CD14-positive monocyte (primary cell): ENCODE measurements at regions of chr17 and their contacts with region 1.

Region 1: GRCh38 chr17:36591434-36592315 is at the start of gene DHRS11:
- DNase-seq: peak; percentile 40 to 64 (median 51)
- H3K4me3 ChIP-seq: peak within 1 kb of the TSS; percentile 40 to 84 (median 51)
- H3K4me3 Mint-ChIP-seq: peak within 1 kb of the TSS; percentile 75 to 80
- H3K27ac ChIP-seq: no peak within 1 kb of the TSS
- H3K27ac Mint-ChIP-seq: peak within 1 kb of the TSS in 2 of 7 donors; percentile 36 to 66
- H3K4me1 ChIP-seq: peaks cover 11 to 18% of the 10 kb centered on the region in 2 donors
- H3K4me1 Mint-ChIP-seq: peaks cover 23% of the 10 kb centered on the region
- H3K27me3 ChIP-seq: peaks cover 6 to 15% of the 10 kb centered on the region in 2 donors
- H3K27me3 Mint-ChIP-seq: peaks cover 11 to 16% (median 13%) of the 10 kb centered on the region in 3 donors
- CTCF ChIP-seq: no peak
- polyA plus RNA-seq, gene DHRS11: 1.2 to 4.3 (median 2.7) TPM

Region 2: GRCh38 chr17:36545465-36546417 is 45.9 kb before region 1 on chr17:
- intact Hi-C with region 1: loop called (anchors 5 kb)
- DNase-seq: peak; percentile 90 to 97 (median 94)
- H3K4me3 ChIP-seq: peak overlapping the region; percentile 68 to 96 (median 88)
- H3K4me3 Mint-ChIP-seq: peak overlapping the region; percentile 87 to 92
- H3K27ac ChIP-seq: peak overlapping the region; percentile 88 to 97
- H3K27ac Mint-ChIP-seq: peak overlapping the region; percentile 93 to 98 (median 96)
- H3K4me1 ChIP-seq: peaks cover 51 to 61% of the 10 kb centered on the region in 2 donors
- H3K4me1 Mint-ChIP-seq: peaks cover 48% of the 10 kb centered on the region
- H3K27me3 ChIP-seq: no peaks in the 10 kb centered on the region
- H3K27me3 Mint-ChIP-seq: no peaks in the 10 kb centered on the region
- CTCF ChIP-seq: no peak

Region 3: DNA sequence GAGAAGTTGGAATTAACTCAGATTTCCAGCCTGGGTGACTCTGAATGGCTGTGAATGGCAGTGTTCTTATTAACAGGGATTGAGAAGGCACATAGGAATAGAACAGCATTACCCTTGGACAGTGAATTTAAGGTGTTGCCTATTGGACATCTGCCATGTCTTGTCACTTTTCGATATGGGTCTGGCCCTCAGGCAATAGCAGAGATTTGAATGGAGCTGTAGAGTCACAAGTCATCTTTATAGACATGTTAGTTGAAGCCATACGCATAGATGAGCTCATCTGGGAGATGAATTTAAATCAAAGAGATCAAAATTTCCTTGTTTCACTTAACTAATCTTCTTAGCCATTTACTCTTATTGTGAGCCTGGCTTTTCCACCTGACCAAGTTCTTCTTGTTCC is 14.9 kb before region 1 on chr17:
- intact Hi-C with region 1: no loop called
- DNase-seq: no peak
- H3K4me3 ChIP-seq: no peak overlapping the region
- H3K4me3 Mint-ChIP-seq: no peak overlapping the region
- H3K27ac ChIP-seq: no peak overlapping the region
- H3K27ac Mint-ChIP-seq: no peak overlapping the region
- H3K4me1 ChIP-seq: no peaks in the 10 kb centered on the region
- H3K4me1 Mint-ChIP-seq: no peaks in the 10 kb centered on the region
- H3K27me3 ChIP-seq: no peaks in the 10 kb centered on the region
- H3K27me3 Mint-ChIP-seq: no peaks in the 10 kb centered on the region
- CTCF ChIP-seq: no peak